Left cardiac atrium (tissue), 4 donors: ENCODE measurements at regions of chr20 and their contacts with region 1.

Region 1: GRCh38 chr20:35303735-35304491 is 11.7 kb upstream of the FAM83C start:
- DNase-seq: peak; percentile 78
- ATAC-seq: peak; percentile 59 to 68

Region 2: GRCh38 chr20:35434067-35435005 is 130.4 kb after region 1 on chr20:
- intact Hi-C with region 1: loop called in 1 of 2 experiments (anchors 5 kb)
- DNase-seq: peak; percentile 41
- ATAC-seq: peak; percentile 37 to 70

Region 3: GRCh38 chr20:35443003-35443402 is 139.1 kb after region 1 on chr20:
- intact Hi-C with region 1: loop called (anchors 5 kb)
- DNase-seq: no peak
- ATAC-seq: no peak